AG04450 (cell line): ENCODE measurements at regions of chr2 and their contacts with region 1.

Region 1: GRCh38 chr2:73494031-73494430 is 108.4 kb downstream of the ALMS1 start:
- DNase-seq: no peak
- H3K4me3 ChIP-seq: no peak overlapping the region
- H3K27ac ChIP-seq: no peak overlapping the region
- H3K27me3 ChIP-seq: no peaks in the 10 kb centered on the region
- CTCF ChIP-seq: no peak

Region 2: GRCh38 chr2:73385595-73386341 is 108.3 kb before region 1 on chr2 and contains the start of gene ALMS1:
- CTCF ChIA-PET with region 1: no interaction called
- POLR2A ChIA-PET with region 1: interaction called, 11 read pairs
- DNase-seq: peak; percentile 61
- H3K4me3 ChIP-seq: peak within 1 kb of the TSS; percentile 72
- H3K27ac ChIP-seq: peak within 1 kb of the TSS; percentile 85
- H3K27me3 ChIP-seq: peaks cover 3% of the 10 kb centered on the region
- CTCF ChIP-seq: peak; percentile 30
- polyA plus RNA-seq, gene ALMS1: 8.1 and 9.3 TPM in 2 replicates